Ovary (tissue), 10 donors: ENCODE measurements at regions of chr5 and their contacts with region 1.

Region 1: DNA sequence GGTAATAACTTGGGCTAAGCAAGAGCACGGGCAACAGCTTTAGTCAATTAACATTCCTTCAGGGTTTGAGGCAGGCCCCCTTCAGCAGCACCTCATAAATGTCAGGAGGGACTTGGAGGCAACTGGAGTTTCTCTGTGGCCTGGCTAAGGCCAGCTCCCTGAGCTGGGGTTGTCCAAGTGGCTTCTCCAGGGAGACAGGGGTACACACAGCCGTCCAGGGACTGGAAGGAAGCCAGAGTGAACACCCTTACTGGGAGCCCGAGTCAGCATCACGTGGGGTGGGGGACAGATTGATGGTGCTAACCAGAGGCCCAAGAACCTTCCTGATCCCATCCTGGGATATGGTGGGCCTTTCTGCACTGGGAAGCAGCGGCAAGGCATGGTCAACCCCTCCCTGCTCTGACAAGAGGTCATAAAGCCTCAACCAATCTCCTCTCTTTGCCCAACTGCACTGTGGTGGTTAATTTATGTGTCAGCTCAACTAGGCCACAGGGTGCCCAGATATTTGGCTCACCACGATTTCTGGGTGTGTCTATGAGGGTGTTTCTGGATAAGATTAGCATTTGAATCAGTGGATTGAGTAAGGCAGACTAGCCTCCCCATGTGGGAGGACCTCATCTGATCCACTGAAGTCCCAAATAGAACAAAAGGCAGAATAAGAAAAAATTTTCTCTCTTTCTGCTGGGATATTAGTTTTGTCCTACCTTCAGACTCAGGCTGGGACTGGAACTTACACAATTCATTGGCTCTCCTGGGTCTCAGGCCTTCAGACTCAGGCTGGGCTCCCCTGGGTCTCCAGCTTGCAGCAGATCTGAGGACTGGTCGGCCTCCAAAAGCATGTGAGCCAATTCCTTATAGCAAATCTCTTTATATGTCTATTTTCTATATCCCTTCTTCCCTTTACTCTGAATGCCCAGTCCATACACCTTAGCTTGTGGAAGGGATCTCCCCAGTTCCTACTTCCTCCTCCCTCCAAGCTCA is 127.2 kb upstream of the LARP1 start:
- DNase-seq: no peak
- H3K4me3 ChIP-seq: no peak overlapping the region
- H3K27ac ChIP-seq: no peak overlapping the region
- H3K4me1 ChIP-seq: no peaks in the 10 kb centered on the region
- H3K27me3 ChIP-seq: no peaks in the 10 kb centered on the region
- CTCF ChIP-seq: no peak
- EP300 ChIP-seq: no peak
- POLR2A ChIP-seq: no peak

Region 2: DNA sequence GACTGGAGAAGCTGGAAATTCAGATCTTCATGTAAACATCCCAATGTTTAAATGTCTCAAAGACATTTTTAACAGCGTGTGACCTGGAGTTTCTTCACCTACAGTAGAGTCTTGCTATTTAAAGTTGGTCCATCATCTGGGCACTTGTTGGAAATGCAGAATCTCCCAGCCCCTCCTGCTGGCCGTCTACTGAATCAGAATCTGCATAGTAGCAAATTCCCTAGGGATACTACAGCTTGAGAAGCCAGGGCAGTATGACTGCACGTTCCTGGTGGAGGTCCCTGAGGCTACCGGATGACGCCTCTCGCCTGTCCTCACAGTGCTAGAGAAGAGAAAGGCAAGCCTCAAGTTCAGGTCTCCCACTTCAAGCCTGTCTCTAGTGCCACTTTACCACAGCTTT is 166.5 kb before region 1 on chr5:
- intact Hi-C with region 1: no loop called
- DNase-seq: no peak
- H3K4me3 ChIP-seq: no peak overlapping the region
- H3K27ac ChIP-seq: no peak overlapping the region
- H3K4me1 ChIP-seq: no peaks in the 10 kb centered on the region
- H3K27me3 ChIP-seq: no peaks in the 10 kb centered on the region
- CTCF ChIP-seq: no peak
- EP300 ChIP-seq: no peak
- POLR2A ChIP-seq: no peak

Region 3: DNA sequence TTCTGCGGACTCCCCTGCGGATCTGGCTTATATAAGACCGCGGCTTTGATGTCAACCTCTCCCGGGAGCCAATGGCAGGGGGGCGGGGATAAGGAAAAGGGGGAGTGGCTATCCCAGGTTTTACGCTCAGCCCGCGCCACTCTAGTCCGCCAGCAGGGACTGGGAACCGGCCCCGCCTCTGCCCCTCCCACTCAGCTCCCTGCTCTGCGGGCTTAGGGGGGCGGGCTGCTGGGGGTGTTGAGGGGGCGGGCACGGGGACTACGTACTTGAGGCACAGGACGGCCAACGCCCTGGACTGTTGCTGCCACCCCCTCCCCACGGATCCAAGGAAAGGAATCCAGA is 149.8 kb before region 1 on chr5 and contains the start of gene HAND1:
- intact Hi-C with region 1: loop called in 1 of 4 experiments (anchors 10 kb)
- DNase-seq: peak in 3 of 5 donors; percentile 32 to 41 (median 33)
- H3K4me3 ChIP-seq: peak within 1 kb of the TSS; percentile 35
- H3K27ac ChIP-seq: no peak within 1 kb of the TSS
- H3K4me1 ChIP-seq: peaks cover 8% of the 10 kb centered on the region
- H3K27me3 ChIP-seq: peaks cover 15% of the 10 kb centered on the region
- CTCF ChIP-seq: no peak
- EP300 ChIP-seq: no peak
- POLR2A ChIP-seq: no peak
- total RNA-seq, gene HAND1: not detected